Activated CD4-positive, alpha-beta memory T cell treated with anti-CD3 and anti-CD28 coated beads, Interleukin-2, amount 10 ng/mL, durations not matched to agents 7 days and 5 days (primary cell): ENCODE measurements at regions of chr1 and their contacts with region 1.

Region 1: GRCh38 chr1:44799770-44800584 is at the start of gene PLK3:
- DNase-seq: peak; percentile 98
- H3K4me3 Mint-ChIP-seq: peak within 1 kb of the TSS; percentile 90
- H3K27ac Mint-ChIP-seq: peak within 1 kb of the TSS; percentile 98
- H3K4me1 Mint-ChIP-seq: peaks cover 47% of the 10 kb centered on the region
- H3K27me3 Mint-ChIP-seq: no peaks in the 10 kb centered on the region
- total RNA-seq, gene PLK3: 62.8 to 63.5 TPM

Region 2: GRCh38 chr1:44786138-44786840 is 13.7 kb before region 1 on chr1:
- CTCF ChIA-PET with region 1: interaction called, 16 read pairs
- POLR2A ChIA-PET with region 1: interaction called, 16 read pairs
- DNase-seq: peak; percentile 78
- H3K4me3 Mint-ChIP-seq: peak overlapping the region; percentile 59
- H3K27ac Mint-ChIP-seq: no peak overlapping the region
- H3K4me1 Mint-ChIP-seq: peaks cover 36% of the 10 kb centered on the region
- H3K27me3 Mint-ChIP-seq: no peaks in the 10 kb centered on the region

Region 3: GRCh38 chr1:44985747-44986359 is 185.9 kb after region 1 on chr1:
- CTCF ChIA-PET with region 1: no interaction called
- POLR2A ChIA-PET with region 1: interaction called, 20 read pairs
- DNase-seq: no peak
- H3K4me3 Mint-ChIP-seq: peak overlapping the region; percentile 90
- H3K27ac Mint-ChIP-seq: peak overlapping the region; percentile 86
- H3K4me1 Mint-ChIP-seq: peaks cover 28% of the 10 kb centered on the region
- H3K27me3 Mint-ChIP-seq: peaks cover 2% of the 10 kb centered on the region